PC-9 (cell line): ENCODE measurements at regions of chr22 and their contacts with region 1.

Region 1: DNA sequence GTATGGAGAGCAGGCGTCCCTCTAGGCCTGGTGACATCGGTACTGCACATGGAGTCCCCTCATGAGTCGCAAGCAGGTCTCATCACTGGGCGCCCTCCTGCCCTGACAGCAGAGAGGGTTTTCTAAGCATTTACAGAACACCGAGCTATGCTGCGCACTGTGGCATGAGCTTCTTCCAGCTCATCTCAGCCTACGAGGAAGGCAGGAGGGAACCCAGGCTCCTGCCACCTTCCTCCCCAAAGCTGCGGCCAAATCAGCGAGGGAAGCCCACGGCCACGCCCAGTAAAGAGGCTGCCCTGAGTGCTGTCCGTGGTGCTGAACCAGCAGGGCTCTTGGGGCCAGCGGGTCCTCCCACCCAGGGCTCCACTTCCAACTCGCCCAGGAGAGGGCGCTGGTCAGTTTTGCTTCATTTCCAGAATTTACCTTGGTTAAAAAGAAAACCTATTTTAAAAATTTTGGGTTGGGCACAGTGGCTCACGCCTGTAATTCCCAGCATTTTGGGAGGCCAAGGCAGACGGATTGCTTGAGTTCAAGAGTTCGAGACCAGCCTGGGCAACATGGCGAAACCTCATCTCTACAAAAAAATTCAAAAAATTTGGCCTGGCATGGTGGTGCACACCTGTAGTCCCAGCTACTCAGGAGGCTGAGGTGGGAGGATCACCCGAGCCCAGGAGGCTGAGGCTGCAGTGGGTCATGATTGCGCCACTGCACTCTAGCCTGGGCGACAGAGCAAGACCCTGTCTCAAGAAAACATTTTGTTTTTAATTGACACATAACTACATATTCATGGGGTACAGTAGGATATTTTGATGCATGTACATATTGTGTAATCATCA is 34.2 kb downstream of the PHF21B start:
- DNase-seq: peak; percentile 76 to 87
- H3K4me3 ChIP-seq: no peak overlapping the region
- H3K27ac ChIP-seq: no peak overlapping the region
- H3K4me1 ChIP-seq: no peaks in the 10 kb centered on the region
- H3K27me3 ChIP-seq: peaks cover 81% of the 10 kb centered on the region
- CTCF ChIP-seq: peak; percentile 97

Region 2: GRCh38 chr22:44684506-44685383 is 290.9 kb before region 1 on chr22:
- CTCF ChIA-PET with region 1: no interaction called
- POLR2A ChIA-PET with region 1: no interaction called
- intact Hi-C with region 1: no loop called
- DNase-seq: peak; percentile 90 to 92
- H3K4me3 ChIP-seq: no peak overlapping the region
- H3K27ac ChIP-seq: 0 out of 2 replicates have a peak overlapping the region, but pooled peaks have one; percentile 13
- H3K4me1 ChIP-seq: peaks cover 34% of the 10 kb centered on the region
- H3K27me3 ChIP-seq: no peaks in the 10 kb centered on the region
- CTCF ChIP-seq: peak; percentile 95

Region 3: DNA sequence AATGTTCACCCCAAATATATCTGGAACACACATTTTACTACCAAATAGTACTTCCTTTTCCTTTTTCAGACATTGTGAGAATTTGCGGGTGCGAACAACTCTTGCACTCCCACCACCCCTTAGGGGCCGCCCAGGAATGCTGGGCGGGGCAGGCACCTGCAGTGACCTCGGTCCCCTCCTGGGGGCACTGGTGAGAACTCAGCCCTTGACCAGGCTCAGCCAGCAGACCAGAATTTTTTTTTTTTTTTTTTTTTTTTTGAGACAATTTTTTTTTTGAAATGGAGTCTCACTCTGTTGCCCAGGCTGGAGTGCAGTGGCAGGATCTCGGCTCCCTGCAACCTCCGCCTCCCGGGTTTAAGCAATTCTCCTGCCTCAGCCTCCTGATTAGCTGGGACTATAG is 147.5 kb before region 1 on chr22:
- CTCF ChIA-PET with region 1: no interaction called
- POLR2A ChIA-PET with region 1: no interaction called
- intact Hi-C with region 1: loop called (anchors 10 kb)
- DNase-seq: peak in 1 of 2 experiments; percentile 31
- H3K4me3 ChIP-seq: no peak overlapping the region
- H3K27ac ChIP-seq: no peak overlapping the region
- H3K4me1 ChIP-seq: no peaks in the 10 kb centered on the region
- H3K27me3 ChIP-seq: no peaks in the 10 kb centered on the region
- CTCF ChIP-seq: peak; percentile 82

Region 4: DNA sequence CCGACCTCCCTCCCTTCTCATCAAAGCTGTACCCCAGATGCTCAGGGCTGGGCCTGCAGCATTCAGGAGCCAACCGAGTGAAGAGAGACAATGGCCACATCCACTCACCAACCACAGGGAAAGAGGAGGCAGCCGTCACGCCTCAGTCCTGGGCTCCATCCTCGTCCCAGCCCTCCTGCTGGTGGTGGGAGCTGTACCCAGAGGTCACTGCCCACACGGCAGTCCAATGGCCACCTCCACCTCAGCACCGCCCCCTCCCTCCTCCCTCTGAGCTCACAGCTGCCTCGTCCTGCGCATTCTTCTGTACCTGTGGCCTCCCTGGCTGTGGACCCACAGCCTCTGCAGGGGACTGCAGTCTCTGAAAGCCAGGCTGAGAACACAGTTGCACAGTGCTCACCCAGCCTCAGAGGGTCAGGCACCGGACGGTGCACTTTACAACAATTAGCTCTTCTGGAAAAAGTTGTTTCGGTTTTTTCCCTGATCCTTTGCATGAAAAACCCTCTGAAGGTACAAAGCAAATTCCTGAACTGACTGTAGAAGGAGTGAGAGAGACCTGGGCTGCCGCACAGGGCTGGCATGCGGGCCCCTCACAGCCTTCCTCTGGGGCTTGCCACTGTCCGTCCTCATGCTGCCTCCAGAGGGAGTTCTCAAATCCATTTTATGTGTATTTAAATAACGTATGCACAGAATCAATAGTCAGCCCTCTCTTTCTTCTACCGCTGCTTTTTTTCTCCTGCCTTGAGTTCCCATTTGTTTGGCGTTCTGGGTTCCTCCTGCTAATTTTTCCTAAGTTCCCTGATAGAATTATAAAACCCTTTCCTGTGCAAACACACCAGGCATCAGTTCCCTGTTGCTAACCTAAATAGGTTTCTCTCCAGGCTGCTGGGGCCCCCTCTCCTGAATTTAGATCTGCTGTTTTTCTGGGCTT is 18.5 kb before region 1 on chr22:
- CTCF ChIA-PET with region 1: no interaction called
- POLR2A ChIA-PET with region 1: no interaction called
- intact Hi-C with region 1: no loop called
- DNase-seq: no peak
- H3K4me3 ChIP-seq: no peak overlapping the region
- H3K27ac ChIP-seq: no peak overlapping the region
- H3K4me1 ChIP-seq: no peaks in the 10 kb centered on the region
- H3K27me3 ChIP-seq: peaks cover 95% of the 10 kb centered on the region
- CTCF ChIP-seq: peak; percentile 24; the same call in 1 of the 2 replicates

Region 5: GRCh38 chr22:44999687-45000086 is 24.0 kb after region 1 on chr22:
- CTCF ChIA-PET with region 1: no interaction called
- POLR2A ChIA-PET with region 1: no interaction called
- intact Hi-C with region 1: no loop called
- DNase-seq: no peak
- H3K4me3 ChIP-seq: no peak overlapping the region
- H3K27ac ChIP-seq: no peak overlapping the region
- H3K4me1 ChIP-seq: no peaks in the 10 kb centered on the region
- H3K27me3 ChIP-seq: peaks cover 77% of the 10 kb centered on the region
- CTCF ChIP-seq: no peak

Region 6: GRCh38 chr22:45082795-45083194 is 107.2 kb after region 1 on chr22:
- CTCF ChIA-PET with region 1: interaction called, 3 read pairs
- POLR2A ChIA-PET with region 1: no interaction called
- intact Hi-C with region 1: loop called (anchors 1 kb)
- DNase-seq: no peak
- H3K4me3 ChIP-seq: no peak overlapping the region
- H3K27ac ChIP-seq: no peak overlapping the region
- H3K4me1 ChIP-seq: no peaks in the 10 kb centered on the region
- H3K27me3 ChIP-seq: peaks cover 30% of the 10 kb centered on the region
- CTCF ChIP-seq: peak; percentile 36; the same call in 1 of the 2 replicates